H1 (cell line): ENCODE measurements at regions of chr12 and their contacts with region 1.

Region 1: GRCh38 chr12:10016881-10017280 is 6.5 kb downstream of the CLEC12B start:
- DNase-seq: no peak
- H3K4me3 ChIP-seq: no peak overlapping the region
- H3K27ac ChIP-seq: no peak overlapping the region
- H3K4me1 ChIP-seq: peaks cover 0 to 3% (median 0%) of the 10 kb centered on the region in 4 experiments; a peak in 3 of 7 replicates
- H3K27me3 ChIP-seq: no peaks in the 10 kb centered on the region
- CTCF ChIP-seq: no peak
- EP300 ChIP-seq: no peak
- POLR2A ChIP-seq: no peak
- RAD21 ChIP-seq: no peak

Region 2: DNA sequence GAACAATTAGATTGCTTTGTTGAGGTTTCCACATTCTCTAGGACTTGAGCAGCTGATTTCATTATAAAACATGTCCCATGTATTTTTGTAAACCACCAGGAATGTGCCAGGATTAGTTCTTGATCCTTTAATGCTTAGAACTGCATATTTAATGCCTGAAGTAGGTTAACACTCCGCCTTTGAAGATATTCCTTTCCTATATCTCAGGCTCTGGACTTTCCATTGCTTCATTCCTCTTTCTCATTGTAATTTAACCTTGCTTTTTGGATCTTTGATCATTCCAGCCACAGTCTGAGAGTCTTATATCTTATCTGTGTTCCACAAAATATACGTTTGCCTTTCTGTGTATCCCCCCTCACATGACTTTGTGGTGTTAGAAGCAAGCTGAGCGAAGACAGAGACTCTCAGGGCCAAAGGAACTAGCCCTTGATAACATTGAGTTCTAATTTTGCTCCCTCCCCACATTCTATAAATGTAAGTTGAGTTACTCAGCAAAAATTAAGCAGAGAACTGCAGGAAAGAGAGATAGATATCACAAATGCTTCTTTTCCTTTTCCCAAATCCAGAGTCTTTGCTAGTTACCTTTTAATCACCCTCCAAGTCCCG is 15.6 kb before region 1 on chr12:
- CTCF ChIA-PET with region 1: interaction called, 31 read pairs
- POLR2A ChIA-PET with region 1: no interaction called
- DNase-seq: no peak
- H3K4me3 ChIP-seq: no peak overlapping the region
- H3K27ac ChIP-seq: no peak overlapping the region
- H3K4me1 ChIP-seq: no peaks in the 10 kb centered on the region
- H3K27me3 ChIP-seq: peaks cover 0 to 1% (median 0%) of the 10 kb centered on the region in 4 experiments; a peak in 1 of 7 replicates
- CTCF ChIP-seq: no peak
- EP300 ChIP-seq: no peak
- POLR2A ChIP-seq: no peak
- RAD21 ChIP-seq: no peak

Region 3: DNA sequence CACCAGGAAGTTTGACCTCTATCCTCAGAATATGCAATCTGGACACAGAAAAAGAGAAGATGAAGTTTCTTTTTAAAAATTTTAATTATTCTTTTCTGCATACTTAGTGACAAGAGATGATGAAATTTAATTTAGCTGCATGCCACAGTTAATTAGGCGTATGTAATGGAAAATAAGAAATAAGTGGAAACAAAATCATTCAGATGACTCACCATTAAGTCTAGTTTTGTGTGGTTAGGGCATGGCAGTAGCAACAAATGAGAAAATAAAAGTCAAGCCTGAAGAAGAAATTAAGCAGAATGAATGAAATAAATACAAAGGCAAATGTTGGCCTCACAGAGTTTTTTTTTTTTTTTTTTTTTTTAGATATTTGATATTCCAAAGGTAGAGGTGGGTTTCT is 259.9 kb after region 1 on chr12:
- CTCF ChIA-PET with region 1: no interaction called
- POLR2A ChIA-PET with region 1: no interaction called
- DNase-seq: no peak
- H3K4me3 ChIP-seq: no peak overlapping the region
- H3K27ac ChIP-seq: no peak overlapping the region
- H3K4me1 ChIP-seq: no peaks in the 10 kb centered on the region
- H3K27me3 ChIP-seq: no peaks in the 10 kb centered on the region
- CTCF ChIP-seq: no peak
- EP300 ChIP-seq: no peak
- POLR2A ChIP-seq: no peak
- RAD21 ChIP-seq: no peak